MCF 10A (cell line): ENCODE measurements at regions of chr3 and their contacts with region 1.

Region 1: DNA sequence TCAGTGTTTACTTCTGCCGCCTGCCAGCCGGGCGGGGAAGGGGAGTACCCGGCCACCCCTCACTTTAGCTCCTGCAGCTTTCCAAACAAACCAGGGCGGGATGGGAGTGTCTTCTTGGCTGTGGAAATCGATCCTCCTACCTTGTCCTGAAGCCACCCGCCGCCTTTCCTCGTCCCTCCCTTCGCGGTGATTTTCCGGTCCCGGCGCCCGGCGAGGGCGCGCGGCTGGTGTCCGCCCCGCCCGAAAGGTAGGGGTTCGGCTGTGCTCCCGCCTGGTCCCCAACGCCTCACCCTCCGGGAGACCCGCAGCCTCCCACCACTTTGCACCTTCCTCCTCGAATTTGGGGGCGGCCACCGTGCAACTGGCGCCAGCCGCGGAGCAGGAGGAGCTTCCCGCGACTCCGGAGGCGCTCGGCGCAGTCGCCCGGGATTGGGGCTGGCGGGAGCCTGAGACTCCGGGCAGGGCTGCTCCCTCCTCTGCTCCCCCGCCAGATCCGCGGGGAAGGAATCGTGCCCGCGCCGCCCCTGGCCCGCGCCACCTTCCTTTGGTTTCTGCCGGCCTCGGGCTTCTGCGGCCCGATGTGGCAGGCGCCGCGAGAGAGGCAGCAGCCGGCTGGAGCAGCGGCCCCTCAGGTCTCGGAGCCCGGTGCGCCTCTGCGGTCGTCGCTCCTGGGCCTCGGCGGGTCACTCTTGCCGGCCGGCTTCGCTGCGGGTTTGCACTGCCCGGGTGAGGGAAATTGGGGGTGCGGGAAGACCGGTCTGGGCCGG is 30.7 kb upstream of the ST3GAL6 start:
- DNase-seq: peak; percentile 40
- H3K4me3 Mint-ChIP-seq: peak overlapping the region; percentile 76
- H3K27ac Mint-ChIP-seq: no peak overlapping the region
- H3K4me1 Mint-ChIP-seq: peaks cover 12% of the 10 kb centered on the region
- H3K27me3 Mint-ChIP-seq: no peaks in the 10 kb centered on the region
- CTCF ChIP-seq: no peak

Region 2: GRCh38 chr3:98778852-98779413 is 46.5 kb after region 1 on chr3:
- CTCF ChIA-PET with region 1: interaction called, 3 read pairs
- POLR2A ChIA-PET with region 1: interaction called, 19 read pairs
- intact Hi-C with region 1: loop called (anchors 2 kb)
- DNase-seq: peak; percentile 87
- H3K4me3 Mint-ChIP-seq: peak overlapping the region; percentile 53
- H3K27ac Mint-ChIP-seq: peak overlapping the region; percentile 43
- H3K4me1 Mint-ChIP-seq: peaks cover 42% of the 10 kb centered on the region
- H3K27me3 Mint-ChIP-seq: no peaks in the 10 kb centered on the region
- CTCF ChIP-seq: no peak